ENCODE measurements at regions of chr11 and their contacts with region 1.

Region 1: DNA sequence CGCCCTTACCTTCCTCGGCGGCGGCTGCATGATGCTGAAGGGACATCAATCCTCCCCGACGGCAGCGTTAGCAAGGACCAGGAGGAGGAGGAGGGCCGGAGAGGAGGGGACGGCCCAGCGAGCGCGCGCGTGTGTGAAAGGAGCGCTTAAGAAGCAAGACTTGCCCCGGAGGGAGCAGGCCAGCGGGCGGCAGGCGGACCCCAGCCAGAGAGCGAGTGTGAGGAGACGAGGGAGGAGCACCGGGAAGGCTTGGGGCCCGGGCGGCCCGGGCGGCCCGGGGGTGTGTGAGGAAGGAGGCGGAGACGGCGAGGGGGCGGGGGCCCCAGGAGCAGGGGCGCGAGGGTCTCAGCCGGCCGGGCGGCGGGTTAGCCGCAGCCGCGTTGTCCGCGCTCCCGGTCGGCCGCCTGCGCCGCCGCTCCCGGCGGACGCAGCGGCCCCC is 251 bp downstream of the FCHSD2 start:
- ATAC-seq: peak; percentile 35 to 54 (median 44)
- H3K4me3 ChIP-seq: peak overlapping the region; percentile 54 to 81 (median 75)
- H3K27ac ChIP-seq: peak overlapping the region; percentile 83 to 87
- H3K4me1 ChIP-seq: peaks cover 10 to 14% of the 10 kb centered on the region in 2 donors

Region 2: GRCh38 chr11:72864702-72865655 is 276.9 kb before region 1 on chr11:
- in situ Hi-C with region 1: loop called in 1 of 9 experiments (anchors 25 kb)
- ATAC-seq: peak; percentile 41 to 78 (median 55)
- H3K4me3 ChIP-seq: no peak overlapping the region
- H3K27ac ChIP-seq: no peak overlapping the region
- H3K4me1 ChIP-seq: peaks cover 0 to 10% of the 10 kb centered on the region in 2 donors

Region 3: GRCh38 chr11:72885749-72886609 is 255.9 kb before region 1 on chr11:
- in situ Hi-C with region 1: loop called in 1 of 9 experiments (anchors 25 kb)
- ATAC-seq: peak in 3 of 8 experiments; percentile 36 to 89 (median 80)
- H3K4me3 ChIP-seq: no peak overlapping the region
- H3K27ac ChIP-seq: no peak overlapping the region
- H3K4me1 ChIP-seq: no peaks in the 10 kb centered on the region

Region 4: DNA sequence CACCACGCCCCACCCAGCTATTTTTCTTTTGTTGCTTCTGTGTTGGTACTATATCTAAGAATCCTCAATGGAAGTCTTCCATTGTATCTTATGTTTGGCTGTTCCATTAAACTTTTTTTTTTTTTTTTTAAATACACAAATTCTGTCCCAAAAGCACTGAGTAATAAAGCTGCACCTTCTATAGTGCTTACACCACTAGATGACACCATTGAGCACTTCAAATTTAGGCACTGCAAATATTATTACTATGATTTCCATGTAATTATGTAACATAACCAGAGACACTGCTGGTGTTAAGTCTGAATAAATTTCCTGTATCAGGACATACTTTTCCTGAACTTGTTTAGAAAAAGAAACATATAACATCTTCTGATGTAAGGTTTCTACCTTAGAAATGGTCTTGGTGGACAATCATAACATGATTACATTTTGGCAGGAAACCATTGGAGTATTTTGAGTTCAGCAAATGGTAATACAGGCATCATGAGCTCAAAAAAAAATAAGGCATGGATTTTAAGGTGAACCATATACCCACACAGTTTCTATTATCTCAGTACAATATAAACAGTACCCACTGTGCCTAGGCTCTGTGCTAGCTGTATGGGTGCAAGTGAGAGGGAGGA is 217.2 kb before region 1 on chr11:
- in situ Hi-C with region 1: loop called in 1 of 9 experiments (anchors 25 kb)
- ATAC-seq: peak in 3 of 8 experiments; percentile 23 to 38 (median 27)
- H3K4me3 ChIP-seq: no peak overlapping the region
- H3K27ac ChIP-seq: no peak overlapping the region
- H3K4me1 ChIP-seq: peaks cover 0 to 3% of the 10 kb centered on the region in 2 donors

Measured in motor neuron (in vitro differentiated cells).